K562 (cell line): ENCODE measurements at regions of chr21 and their contacts with region 1.

Region 1: DNA sequence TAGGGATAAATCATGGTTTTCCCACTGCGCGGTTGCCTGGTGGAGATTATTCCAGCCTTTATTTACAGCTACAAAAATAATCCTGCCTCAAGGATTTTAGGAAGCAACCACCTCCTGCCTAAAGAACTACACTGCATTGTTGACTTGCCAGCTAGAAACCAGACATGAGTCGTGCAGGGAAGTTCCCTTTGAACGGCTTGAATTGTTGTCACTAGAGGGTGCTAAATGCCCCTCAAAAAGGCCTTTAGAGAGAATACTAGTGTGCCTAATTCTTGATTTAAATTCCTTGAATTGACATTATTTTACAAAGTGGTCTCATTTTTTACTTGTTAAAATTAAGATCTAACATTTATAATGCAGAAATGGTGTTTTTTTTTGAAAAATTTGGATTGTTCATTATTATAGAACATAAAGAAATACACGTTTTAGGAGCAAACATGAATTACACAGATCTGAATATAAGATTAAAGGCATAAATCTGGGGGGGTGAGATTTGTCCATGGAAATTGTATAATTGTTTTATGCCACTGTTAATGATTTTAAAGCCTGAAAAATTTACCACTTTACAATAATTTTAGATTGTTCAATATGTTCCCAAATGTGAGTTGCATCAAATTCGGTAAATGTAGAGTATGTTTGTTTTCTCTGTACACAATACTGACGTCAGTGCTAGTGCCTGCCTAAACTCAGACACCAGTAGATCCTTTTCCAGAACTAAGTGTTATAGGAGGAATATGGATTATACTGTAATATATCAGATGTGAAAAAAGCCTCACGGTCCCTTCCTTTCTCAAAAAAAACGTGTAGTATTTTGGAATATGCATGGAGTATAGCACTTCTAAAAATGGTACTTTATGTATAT is 7.6 kb upstream of the ERG start:
- DNase-seq: peak in 3 of 4 experiments; percentile 20 to 60 (median 31)
- ATAC-seq: peak; percentile 95
- H3K4me3 ChIP-seq: no peak overlapping the region
- H3K27ac ChIP-seq: no peak overlapping the region
- H3K4me1 ChIP-seq: no peaks in the 10 kb centered on the region
- H3K27me3 ChIP-seq: peaks cover 17 to 24% of the 10 kb centered on the region in 2 experiments
- CTCF ChIP-seq: peak; percentile 57 to 75 (median 66)
- EP300 ChIP-seq: no peak
- POLR2A ChIP-seq: no peak
- RAD21 ChIP-seq: peak; percentile 59 to 77

Region 2: GRCh38 chr21:38494703-38495102 is 11.2 kb before region 1 on chr21:
- CTCF ChIA-PET with region 1: no interaction called
- POLR2A ChIA-PET with region 1: no interaction called
- in situ Hi-C with region 1: no loop called
- intact Hi-C with region 1: no loop called
- DNase-seq: no peak
- ATAC-seq: no peak
- H3K4me3 ChIP-seq: no peak overlapping the region
- H3K27ac ChIP-seq: no peak overlapping the region
- H3K4me1 ChIP-seq: no peaks in the 10 kb centered on the region; a peak in 1 of 5 replicates
- H3K27me3 ChIP-seq: peaks cover 7 to 19% of the 10 kb centered on the region in 2 experiments
- CTCF ChIP-seq: no peak
- EP300 ChIP-seq: no peak
- POLR2A ChIP-seq: no peak
- RAD21 ChIP-seq: no peak

Region 3: GRCh38 chr21:38712071-38712470 is 206.2 kb after region 1 on chr21:
- CTCF ChIA-PET with region 1: no interaction called
- POLR2A ChIA-PET with region 1: no interaction called
- in situ Hi-C with region 1: no loop called
- intact Hi-C with region 1: loop called (anchors 10 kb)
- DNase-seq: peak in 2 of 4 experiments; percentile 32 to 51
- ATAC-seq: peak; percentile 89
- H3K4me3 ChIP-seq: no peak overlapping the region
- H3K27ac ChIP-seq: no peak overlapping the region
- H3K4me1 ChIP-seq: no peaks in the 10 kb centered on the region; a peak in 1 of 5 replicates
- H3K27me3 ChIP-seq: peaks cover 0 to 2% of the 10 kb centered on the region in 2 experiments; a peak in 2 of 5 replicates
- CTCF ChIP-seq: peak; percentile 45 to 72 (median 62)
- EP300 ChIP-seq: no peak
- POLR2A ChIP-seq: no peak
- RAD21 ChIP-seq: peak in 1 of 2 experiments; percentile 66; a peak in 3 of 4 replicates